Adrenal gland (tissue), 19 donors: ENCODE measurements at regions of chr17 and their contacts with region 1.

Region 1: GRCh38 chr17:50478391-50479381 is at the start of gene RSAD1:
- DNase-seq: peak; percentile 85 to 92 (median 89)
- H3K4me3 ChIP-seq: peak within 1 kb of the TSS in 3 of 4 donors; percentile 47 to 92 (median 70)
- H3K27ac ChIP-seq: peak within 1 kb of the TSS; percentile 57 to 93 (median 90)
- H3K4me1 ChIP-seq: peaks cover 16 to 25% of the 10 kb centered on the region in 2 donors
- H3K27me3 ChIP-seq: no peaks in the 10 kb centered on the region
- CTCF ChIP-seq: peak in 5 of 6 experiments; percentile 42 to 92 (median 89)
- POLR2A ChIP-seq: peak; percentile 92 to 93
- total RNA-seq, gene RSAD1: 28.4 to 77.3 (median 51.7) TPM

Region 2: GRCh38 chr17:50361561-50362480 is 116.9 kb before region 1 on chr17:
- intact Hi-C with region 1: loop called (anchors 5 kb)
- DNase-seq: peak; percentile 56 to 85 (median 76)
- H3K4me3 ChIP-seq: no peak overlapping the region
- H3K27ac ChIP-seq: no peak overlapping the region
- H3K4me1 ChIP-seq: peaks cover 7 to 16% of the 10 kb centered on the region in 2 donors
- H3K27me3 ChIP-seq: no peaks in the 10 kb centered on the region
- CTCF ChIP-seq: peak; percentile 66 to 77 (median 74)
- POLR2A ChIP-seq: no peak

Region 3: GRCh38 chr17:50541716-50542688 is 63.3 kb after region 1 on chr17:
- intact Hi-C with region 1: loop called in 1 of 2 experiments (anchors 5 kb)
- DNase-seq: peak; percentile 84 to 91 (median 90)
- H3K4me3 ChIP-seq: peak overlapping the region in 2 of 4 donors; percentile 27 to 50
- H3K27ac ChIP-seq: peak overlapping the region; percentile 3 to 83 (median 79)
- H3K4me1 ChIP-seq: peaks cover 22 to 32% of the 10 kb centered on the region in 2 donors
- H3K27me3 ChIP-seq: no peaks in the 10 kb centered on the region
- CTCF ChIP-seq: peak in 2 of 6 experiments; percentile 15 to 23
- POLR2A ChIP-seq: peak; percentile 51 to 82

Region 4: DNA sequence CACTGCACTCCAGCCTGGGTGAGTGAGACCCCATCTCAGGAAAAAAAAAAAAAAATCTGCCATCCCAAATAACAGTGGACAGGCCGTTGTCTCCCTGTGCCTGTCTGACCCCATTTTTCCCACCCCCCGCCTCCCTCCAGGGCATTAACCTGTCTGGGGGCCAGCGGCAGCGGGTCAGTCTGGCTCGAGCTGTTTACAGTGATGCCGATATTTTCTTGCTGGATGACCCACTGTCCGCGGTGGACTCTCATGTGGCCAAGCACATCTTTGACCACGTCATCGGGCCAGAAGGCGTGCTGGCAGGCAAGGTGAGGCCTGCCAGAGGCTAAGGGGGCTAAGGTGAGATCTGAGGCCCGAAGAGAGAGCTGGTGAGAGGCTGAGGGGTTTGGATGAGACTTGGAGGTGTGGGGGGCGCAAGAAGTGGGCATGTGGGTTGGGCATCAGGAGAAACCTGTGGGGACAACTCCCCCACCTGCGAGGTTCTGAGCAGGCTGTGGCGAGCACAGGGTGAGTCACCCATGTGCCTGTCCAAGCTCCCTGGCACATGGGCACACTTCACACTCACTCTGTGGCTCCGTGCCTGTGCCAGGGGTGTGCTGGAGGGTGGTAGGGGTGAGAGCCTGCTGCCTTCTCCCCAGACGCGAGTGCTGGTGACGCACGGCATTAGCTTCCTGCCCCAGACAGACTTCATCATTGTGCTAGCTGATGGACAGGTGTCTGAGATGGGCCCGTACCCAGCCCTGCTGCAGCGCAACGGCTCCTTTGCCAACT is 194.3 kb after region 1 on chr17:
- intact Hi-C with region 1: no loop called
- DNase-seq: peak in 6 of 7 donors; percentile 68 to 82 (median 79)
- H3K4me3 ChIP-seq: no peak overlapping the region
- H3K27ac ChIP-seq: peak overlapping the region in 2 of 5 donors; percentile 43
- H3K4me1 ChIP-seq: peaks cover 4 to 15% of the 10 kb centered on the region in 2 donors
- H3K27me3 ChIP-seq: no peaks in the 10 kb centered on the region
- CTCF ChIP-seq: no peak
- POLR2A ChIP-seq: no peak

Region 5: GRCh38 chr17:50689956-50690886 is 211.5 kb after region 1 on chr17:
- intact Hi-C with region 1: loop called in 1 of 2 experiments (anchors 10 kb)
- DNase-seq: peak in 6 of 7 donors; percentile 54 to 73 (median 66)
- H3K4me3 ChIP-seq: no peak overlapping the region
- H3K27ac ChIP-seq: peak overlapping the region; percentile 69 to 91 (median 87)
- H3K4me1 ChIP-seq: peaks cover 39 to 72% of the 10 kb centered on the region in 2 donors
- H3K27me3 ChIP-seq: no peaks in the 10 kb centered on the region
- CTCF ChIP-seq: no peak
- POLR2A ChIP-seq: peak in 1 of 2 donors; percentile 32